ENCODE measurements at regions of chr7 and their contacts with region 1.

Region 1: GRCh38 chr7:2209146-2209960 is 23.4 kb downstream of the MAD1L1 start:
- DNase-seq: peak; percentile 59
- H3K4me3 ChIP-seq: no peak overlapping the region
- H3K27ac ChIP-seq: no peak overlapping the region
- H3K4me1 ChIP-seq: peaks cover 0 to 4% (median 0%) of the 10 kb centered on the region in 4 donors
- H3K27me3 ChIP-seq: no peaks in the 10 kb centered on the region
- CTCF ChIP-seq: peak; percentile 59 to 72 (median 67)
- EP300 ChIP-seq: no peak
- POLR2A ChIP-seq: no peak

Region 2: GRCh38 chr7:1664711-1665548 is 544.4 kb before region 1 on chr7:
- in situ Hi-C with region 1: loop called in 2 of 4 experiments (anchors 25 kb)
- intact Hi-C with region 1: loop called (anchors 10 kb)
- DNase-seq: peak; percentile 39
- H3K4me3 ChIP-seq: peak overlapping the region; percentile 26 to 59 (median 32)
- H3K27ac ChIP-seq: peak overlapping the region in 3 of 4 donors; percentile 1 to 23 (median 17)
- H3K4me1 ChIP-seq: peaks cover 11 to 49% (median 45%) of the 10 kb centered on the region in 4 donors
- H3K27me3 ChIP-seq: peaks cover 85% of the 10 kb centered on the region
- CTCF ChIP-seq: peak in 4 of 5 experiments; percentile 41 to 72 (median 59)
- EP300 ChIP-seq: no peak
- POLR2A ChIP-seq: no peak

Region 3: GRCh38 chr7:2104107-2104710 is 105.1 kb before region 1 on chr7:
- in situ Hi-C with region 1: no loop called
- intact Hi-C with region 1: loop called (anchors 5 kb)
- DNase-seq: peak; percentile 75
- H3K4me3 ChIP-seq: peak overlapping the region in 1 of 4 donors; percentile 2
- H3K27ac ChIP-seq: peak overlapping the region in 3 of 4 donors; percentile 4 to 82 (median 55)
- H3K4me1 ChIP-seq: peaks cover 7 to 18% (median 14%) of the 10 kb centered on the region in 4 donors
- H3K27me3 ChIP-seq: no peaks in the 10 kb centered on the region
- CTCF ChIP-seq: peak; percentile 41 to 58 (median 45)
- EP300 ChIP-seq: no peak
- POLR2A ChIP-seq: no peak

Measured in transverse colon (tissue), 4 donors.